T-cell (primary cell): ENCODE measurements at regions of chr9 and their contacts with region 1.

Region 1: DNA sequence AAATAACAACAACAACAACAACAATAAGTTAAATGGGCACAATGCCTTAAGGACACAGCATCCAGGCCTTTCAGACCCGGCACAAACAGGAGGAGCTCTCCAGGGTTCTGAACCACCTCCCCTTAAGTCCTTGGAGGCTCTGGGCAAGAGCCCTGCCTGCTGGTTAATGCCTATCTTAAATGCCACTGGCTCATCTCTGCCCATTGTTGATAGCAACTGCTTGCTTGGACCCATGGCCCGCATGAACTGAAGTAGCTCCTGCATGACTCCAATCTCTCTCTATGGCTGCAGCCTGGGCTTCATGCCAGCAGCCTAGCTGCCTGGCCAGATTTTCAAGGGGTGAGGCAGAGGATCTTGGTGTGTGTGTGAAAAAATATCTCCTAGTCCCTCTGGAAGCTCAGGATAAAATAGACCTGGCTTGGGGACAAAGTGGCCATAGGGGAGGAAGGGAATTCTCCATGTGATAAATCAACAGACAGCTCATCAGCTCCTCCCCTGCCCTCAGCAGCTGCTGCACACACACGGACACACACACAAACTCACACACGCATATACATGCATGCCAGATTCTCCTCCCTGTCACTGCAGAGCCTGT is 27.4 kb downstream of the FAM219A start:
- DNase-seq: peak in 5 of 35 experiments; percentile 2 to 24 (median 7)
- ATAC-seq: no peak
- H3K4me3 ChIP-seq: no peak overlapping the region
- H3K4me3 Mint-ChIP-seq: no peak overlapping the region
- H3K27ac ChIP-seq: no peak overlapping the region
- H3K27ac Mint-ChIP-seq: no peak overlapping the region
- H3K4me1 ChIP-seq: no peaks in the 10 kb centered on the region
- H3K4me1 Mint-ChIP-seq: no peaks in the 10 kb centered on the region
- H3K27me3 ChIP-seq: no peaks in the 10 kb centered on the region
- H3K27me3 Mint-ChIP-seq: no peaks in the 10 kb centered on the region

Region 2: GRCh38 chr9:34396276-34397214 is 34.4 kb before region 1 on chr9:
- CTCF ChIA-PET with region 1: no interaction called
- POLR2A ChIA-PET with region 1: no interaction called
- DNase-seq: no peak
- ATAC-seq: no peak
- H3K4me3 ChIP-seq: no peak overlapping the region
- H3K4me3 Mint-ChIP-seq: no peak overlapping the region
- H3K27ac ChIP-seq: no peak overlapping the region
- H3K27ac Mint-ChIP-seq: no peak overlapping the region
- H3K4me1 ChIP-seq: no peaks in the 10 kb centered on the region
- H3K4me1 Mint-ChIP-seq: no peaks in the 10 kb centered on the region
- H3K27me3 ChIP-seq: no peaks in the 10 kb centered on the region
- H3K27me3 Mint-ChIP-seq: no peaks in the 10 kb centered on the region

Region 3: GRCh38 chr9:35014517-35014916 is 583.6 kb after region 1 on chr9:
- CTCF ChIA-PET with region 1: interaction called in 1 of 2 experiments, 7 read pairs
- POLR2A ChIA-PET with region 1: interaction called in 1 of 2 experiments, 12 read pairs
- DNase-seq: no peak
- ATAC-seq: no peak
- H3K4me3 ChIP-seq: no peak overlapping the region
- H3K4me3 Mint-ChIP-seq: no peak overlapping the region
- H3K27ac ChIP-seq: no peak overlapping the region
- H3K27ac Mint-ChIP-seq: no peak overlapping the region
- H3K4me1 ChIP-seq: peaks cover 4 to 5% of the 10 kb centered on the region in 2 experiments
- H3K4me1 Mint-ChIP-seq: peaks cover 7 to 8% (median 8%) of the 10 kb centered on the region in 3 donors
- H3K27me3 ChIP-seq: no peaks in the 10 kb centered on the region
- H3K27me3 Mint-ChIP-seq: no peaks in the 10 kb centered on the region